Keratinocyte (primary cell): ENCODE measurements at regions of chr19 and their contacts with region 1.

Region 1: DNA sequence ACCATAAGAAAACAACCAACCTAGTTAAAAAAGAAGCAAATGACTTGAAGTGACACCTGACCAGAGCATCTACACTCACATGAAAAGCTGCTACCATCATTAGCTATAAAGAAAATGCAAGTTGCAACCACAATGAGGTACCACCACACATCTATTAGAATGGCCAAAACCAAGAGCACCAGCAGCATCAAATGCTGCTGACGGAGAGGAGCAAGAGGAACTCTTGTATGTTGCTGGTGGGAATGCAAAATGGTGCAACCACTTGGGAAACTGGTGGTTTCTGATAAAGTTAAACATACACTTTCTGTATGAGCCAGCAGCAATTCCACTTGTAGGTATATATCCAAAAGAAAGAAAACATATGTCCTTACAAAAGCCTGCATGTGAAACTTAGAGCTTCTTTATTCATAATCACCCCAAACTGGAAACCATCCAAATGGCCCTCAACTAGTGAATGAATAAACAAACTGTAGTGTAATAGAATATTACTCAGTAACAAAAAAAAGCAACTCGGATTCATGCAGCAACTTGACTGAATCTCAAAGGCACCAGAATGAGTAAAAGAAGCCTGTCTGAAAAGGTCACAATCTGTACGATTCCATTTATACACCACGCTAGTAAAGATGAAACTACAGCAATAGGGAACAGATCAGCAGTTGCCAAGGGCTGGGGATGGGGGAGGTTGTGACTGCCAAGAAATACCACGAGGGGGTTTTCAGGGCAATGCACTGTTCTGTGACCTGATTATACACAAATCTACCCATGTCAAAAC is 60.9 kb upstream of the RANBP3 start:
- DNase-seq: no peak
- H3K4me3 ChIP-seq: no peak overlapping the region
- H3K27ac ChIP-seq: no peak overlapping the region
- H3K4me1 ChIP-seq: no peaks in the 10 kb centered on the region
- H3K27me3 ChIP-seq: no peaks in the 10 kb centered on the region
- CTCF ChIP-seq: no peak

Region 2: GRCh38 chr19:6110360-6110977 is 71.6 kb after region 1 on chr19 and contains the start of gene RFX2:
- dilution Hi-C with region 1: loop called (anchors 10 kb)
- DNase-seq: peak; percentile 83
- H3K4me3 ChIP-seq: peak within 1 kb of the TSS; percentile 63 to 87 (median 83)
- H3K27ac ChIP-seq: peak within 1 kb of the TSS; percentile 92
- H3K4me1 ChIP-seq: peaks cover 7% of the 10 kb centered on the region
- H3K27me3 ChIP-seq: no peaks in the 10 kb centered on the region
- CTCF ChIP-seq: no peak
- polyA plus RNA-seq, gene RFX2: 5.8 to 7.3 TPM (median 5.9 TPM) in 3 replicates